Activated CD4-positive, alpha-beta T cell treated with anti-CD3 and anti-CD28 coated beads for 36 hours (primary cell): ENCODE measurements at regions of chr5 and their contacts with region 1.

Region 1: DNA sequence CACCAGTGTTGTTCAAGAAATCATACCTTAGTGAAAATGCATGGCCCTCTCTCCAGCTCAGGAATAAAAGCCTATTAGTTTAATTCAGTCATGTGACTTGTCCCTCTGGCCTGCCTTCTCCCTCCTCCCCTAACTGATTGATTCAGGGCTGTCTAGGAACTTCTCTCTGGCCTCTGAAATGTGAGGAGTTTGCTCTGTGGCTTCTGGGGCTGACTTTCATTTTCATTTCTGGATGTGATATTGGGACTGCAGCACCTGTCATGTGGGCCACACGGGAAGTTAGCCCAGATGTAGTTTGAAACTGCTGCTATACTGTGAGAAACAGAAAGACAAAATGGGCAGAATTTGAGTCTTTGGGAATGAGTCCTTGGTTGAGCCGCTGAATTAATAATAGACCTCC is 44.8 kb downstream of the PARP8 start:
- DNase-seq: peak; percentile 72
- ATAC-seq: peak; percentile 95
- H3K4me3 Mint-ChIP-seq: peak overlapping the region; percentile 65
- H3K27ac Mint-ChIP-seq: peak overlapping the region; percentile 92
- H3K4me1 Mint-ChIP-seq: peaks cover 82% of the 10 kb centered on the region
- H3K27me3 Mint-ChIP-seq: no peaks in the 10 kb centered on the region

Region 2: DNA sequence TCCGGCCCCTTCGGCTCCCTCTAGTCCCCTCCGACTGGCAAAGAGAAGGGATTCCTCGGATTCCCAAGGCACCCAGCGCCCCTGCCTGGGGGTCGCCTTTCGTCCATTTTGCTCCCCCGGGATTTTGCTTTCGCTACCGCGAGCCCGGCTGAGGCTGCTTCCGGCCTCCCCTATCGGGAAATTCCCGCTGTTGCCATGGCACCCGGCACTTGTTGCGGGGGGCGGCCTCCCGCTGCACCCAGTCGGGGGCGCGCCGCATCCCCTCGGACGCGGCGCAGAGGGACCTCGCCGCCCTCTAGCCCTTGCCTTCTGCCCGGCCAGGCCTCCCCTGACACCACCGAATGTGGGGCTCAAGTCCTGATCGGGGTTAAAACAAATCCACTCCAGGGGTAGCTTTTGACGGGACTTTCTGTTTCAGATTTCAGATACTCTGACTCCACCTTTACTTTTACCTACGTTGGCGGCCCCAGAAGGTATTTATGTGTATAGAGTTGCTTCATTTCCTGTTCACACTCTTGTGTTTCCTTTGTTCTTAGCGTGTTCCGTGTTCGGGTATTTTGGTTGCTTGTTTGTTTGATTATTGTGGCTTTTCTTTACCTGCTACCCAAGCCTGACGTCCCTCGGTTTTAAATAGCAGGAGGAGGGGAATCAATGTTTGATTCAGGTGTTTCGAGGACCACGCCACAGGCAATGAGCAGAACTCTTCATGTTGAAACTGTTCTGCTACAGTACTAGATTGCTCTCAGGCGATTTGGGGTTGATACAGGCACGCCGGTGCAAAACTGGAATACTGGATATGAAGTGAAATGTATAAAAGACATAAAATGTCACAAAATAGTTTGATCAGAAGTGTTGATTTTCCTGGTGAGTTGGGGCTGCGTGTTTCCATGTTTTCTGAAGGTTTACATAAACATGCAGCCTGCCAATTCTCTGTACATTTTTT is 43.3 kb before region 1 on chr5:
- CTCF ChIA-PET with region 1: no interaction called
- POLR2A ChIA-PET with region 1: interaction called, 3 read pairs
- intact Hi-C with region 1: loop called (anchors 1 to 2 kb)
- DNase-seq: peak; percentile 92
- ATAC-seq: peak; percentile 70
- H3K4me3 Mint-ChIP-seq: peak overlapping the region; percentile 85
- H3K27ac Mint-ChIP-seq: peak overlapping the region; percentile 99
- H3K4me1 Mint-ChIP-seq: peaks cover 40% of the 10 kb centered on the region
- H3K27me3 Mint-ChIP-seq: no peaks in the 10 kb centered on the region

Region 3: DNA sequence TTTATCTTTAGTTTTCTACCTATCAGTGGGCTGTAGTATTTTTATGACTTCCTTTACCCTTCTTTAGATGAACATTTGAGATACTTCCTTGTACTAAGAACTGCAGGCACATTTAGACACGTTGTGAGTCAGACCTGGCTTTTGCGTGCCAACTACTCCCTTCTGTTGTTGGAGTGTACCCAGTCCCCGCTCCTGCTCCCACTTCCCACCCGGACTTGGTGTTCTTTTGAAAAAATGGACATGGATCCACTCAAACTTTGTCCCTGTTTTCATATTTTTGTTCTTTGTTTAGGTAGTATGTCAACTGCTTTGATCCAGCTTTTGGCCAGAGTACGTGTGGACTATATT is 15.8 kb after region 1 on chr5:
- CTCF ChIA-PET with region 1: interaction called, 3 read pairs
- POLR2A ChIA-PET with region 1: no interaction called
- intact Hi-C with region 1: loop called (anchors 1 to 2 kb)
- DNase-seq: peak; percentile 61
- ATAC-seq: peak; percentile 88
- H3K4me3 Mint-ChIP-seq: peak overlapping the region; percentile 45
- H3K27ac Mint-ChIP-seq: peak overlapping the region; percentile 91
- H3K4me1 Mint-ChIP-seq: peaks cover 60% of the 10 kb centered on the region
- H3K27me3 Mint-ChIP-seq: no peaks in the 10 kb centered on the region

Region 4: GRCh38 chr5:50744776-50745175 is 33.5 kb after region 1 on chr5:
- CTCF ChIA-PET with region 1: interaction called, 3 read pairs
- POLR2A ChIA-PET with region 1: no interaction called
- intact Hi-C with region 1: loop called (anchors 2 kb)
- DNase-seq: no peak
- ATAC-seq: peak; percentile 57
- H3K4me3 Mint-ChIP-seq: peak overlapping the region; percentile 73
- H3K27ac Mint-ChIP-seq: peak overlapping the region; percentile 91
- H3K4me1 Mint-ChIP-seq: peaks cover 64% of the 10 kb centered on the region
- H3K27me3 Mint-ChIP-seq: no peaks in the 10 kb centered on the region

Region 5: GRCh38 chr5:50800410-50800809 is 89.1 kb after region 1 on chr5:
- CTCF ChIA-PET with region 1: no interaction called
- POLR2A ChIA-PET with region 1: no interaction called
- intact Hi-C with region 1: no loop called
- DNase-seq: no peak
- ATAC-seq: no peak
- H3K4me3 Mint-ChIP-seq: no peak overlapping the region
- H3K27ac Mint-ChIP-seq: no peak overlapping the region
- H3K4me1 Mint-ChIP-seq: no peaks in the 10 kb centered on the region
- H3K27me3 Mint-ChIP-seq: no peaks in the 10 kb centered on the region